Posterior cingulate gyrus (tissue), 11 donors: ENCODE measurements at regions of chr21 and their contacts with region 1.

Region 1: DNA sequence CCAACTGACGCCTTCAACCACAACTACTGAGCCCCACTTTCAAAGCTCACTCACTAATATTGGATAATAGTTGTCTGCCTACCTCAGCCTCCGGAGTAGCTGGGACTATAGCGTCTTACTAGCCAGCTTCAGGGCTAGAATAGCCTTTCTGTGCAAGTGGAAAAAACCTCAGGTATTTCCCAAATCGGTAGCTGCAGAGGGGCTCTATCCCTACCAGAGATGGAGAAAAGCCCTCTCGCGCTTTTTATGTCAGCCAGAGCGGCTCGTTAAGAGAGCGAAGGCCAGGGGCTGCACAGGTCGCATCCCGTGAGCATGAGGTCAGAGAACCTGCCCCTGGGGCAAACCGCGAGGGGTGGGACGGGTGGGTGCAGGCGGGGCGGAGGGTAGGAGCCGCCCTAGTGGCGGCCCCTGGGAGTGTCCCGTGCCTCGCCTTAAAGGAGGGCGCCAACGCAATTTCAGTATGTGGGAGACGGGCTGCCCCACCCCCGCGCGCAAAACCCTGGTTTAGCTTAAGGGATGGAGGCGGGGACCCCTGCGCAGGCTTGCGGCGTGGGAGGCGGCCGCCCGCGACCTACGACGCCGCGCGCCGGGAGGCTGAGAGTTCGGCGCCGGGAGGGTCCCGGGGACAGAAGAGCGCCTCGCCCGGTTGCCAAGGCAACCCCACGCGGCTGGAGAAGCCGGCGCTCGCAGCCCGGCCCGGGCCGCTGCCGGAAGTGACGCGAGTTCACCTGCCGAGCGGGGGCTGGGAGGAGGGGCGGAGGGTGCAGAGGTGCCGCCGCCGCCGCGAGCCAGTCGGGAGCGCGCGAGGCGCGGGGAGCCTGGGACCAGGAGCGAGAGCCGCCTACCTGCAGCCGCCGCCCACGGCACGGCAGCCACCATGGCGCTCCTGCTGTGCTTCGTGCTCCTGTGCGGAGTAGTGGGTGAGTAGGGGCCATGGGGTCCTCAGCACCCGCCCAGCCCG is at the start of gene CXADR:
- DNase-seq: peak; percentile 70 to 98 (median 80)

Region 2: GRCh38 chr21:17454315-17455027 is 58.1 kb before region 1 on chr21:
- intact Hi-C with region 1: loop called (anchors 10 kb)
- DNase-seq: peak; percentile 48 to 95 (median 70)

Region 3: DNA sequence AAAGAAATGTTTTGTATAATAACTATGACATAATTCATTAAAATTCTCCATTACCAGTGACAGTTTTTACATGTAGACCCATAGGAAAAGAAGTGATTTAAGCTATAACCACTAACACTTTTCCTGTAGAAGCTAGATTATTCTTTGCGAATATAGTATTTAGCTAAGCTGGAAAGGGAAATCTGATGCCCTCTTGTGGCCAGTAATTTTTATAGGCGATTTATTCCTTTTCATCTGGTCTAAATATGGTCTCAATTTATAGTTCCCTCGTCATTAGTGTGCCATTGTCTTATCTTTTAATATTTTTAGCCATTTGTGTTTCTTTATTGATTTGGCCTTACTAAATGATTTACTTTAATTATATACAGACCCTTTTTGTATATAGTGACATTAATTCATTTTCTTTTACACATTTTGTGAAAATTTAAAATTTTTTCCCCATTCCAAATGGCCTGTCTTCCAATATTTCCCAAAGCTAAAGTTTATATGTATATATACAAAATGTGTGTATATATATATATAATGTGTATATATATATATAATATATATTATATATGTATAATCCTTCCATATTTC is 73.4 kb after region 1 on chr21:
- intact Hi-C with region 1: loop called (anchors 5 kb)
- DNase-seq: no peak

Region 4: GRCh38 chr21:18443085-18443484 is 930.6 kb after region 1 on chr21:
- intact Hi-C with region 1: no loop called
- DNase-seq: no peak